Natural killer cell (primary cell): ENCODE measurements at regions of chr19 and their contacts with region 1.

Region 1: DNA sequence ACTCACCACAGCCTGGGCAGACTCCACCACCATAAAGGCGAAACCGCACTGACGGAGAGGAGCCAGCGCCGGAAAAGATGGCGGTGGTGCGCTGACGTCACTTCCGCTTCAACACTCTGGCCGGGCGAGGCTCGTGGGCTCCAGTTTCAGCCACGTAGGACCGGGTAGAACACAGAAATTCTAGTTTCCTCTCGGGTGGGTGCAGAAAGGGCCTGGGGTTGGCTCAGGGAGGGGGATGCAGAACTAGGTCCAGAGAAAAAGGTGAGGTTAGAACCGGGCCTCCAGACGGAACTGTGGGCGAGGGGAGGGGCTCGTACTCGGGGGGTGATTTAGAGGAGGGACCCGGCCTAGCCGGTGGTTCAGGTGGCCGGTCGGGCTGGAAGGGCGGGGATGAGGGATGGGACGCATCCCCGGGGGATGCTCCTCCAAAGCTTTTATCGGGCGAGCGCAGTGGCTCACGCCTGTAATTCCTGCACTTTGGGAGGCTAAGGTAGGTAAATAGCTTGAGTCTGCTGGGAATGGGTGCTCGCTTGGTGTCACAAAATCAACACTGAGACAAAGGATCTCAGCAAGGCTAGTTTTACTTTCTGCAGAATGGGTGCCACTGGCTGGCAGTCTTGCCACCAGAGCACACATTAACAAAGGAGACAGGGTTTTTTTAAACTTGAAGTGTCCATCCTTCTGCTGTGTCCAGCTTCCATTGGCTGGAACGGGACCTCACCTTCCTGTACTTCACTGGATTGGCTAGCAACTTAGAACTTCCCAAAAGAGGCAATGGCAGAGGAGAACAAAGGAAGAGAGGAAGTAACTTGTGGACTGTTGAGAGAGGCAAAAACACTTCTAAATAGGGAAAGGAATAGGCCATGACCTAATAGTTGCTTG is at the start of gene ZNF561:
- DNase-seq: peak; percentile 86 to 97
- ATAC-seq: peak; percentile 85 to 93 (median 92)
- H3K4me3 ChIP-seq: peak within 1 kb of the TSS; percentile 77
- H3K4me3 Mint-ChIP-seq: peak within 1 kb of the TSS; percentile 97
- H3K27ac ChIP-seq: peak within 1 kb of the TSS; percentile 84
- H3K27ac Mint-ChIP-seq: peak within 1 kb of the TSS; percentile 97 to 100
- H3K4me1 ChIP-seq: peaks cover 16% of the 10 kb centered on the region
- H3K4me1 Mint-ChIP-seq: peaks cover 22 to 27% of the 10 kb centered on the region in 2 donors
- H3K27me3 ChIP-seq: no peaks in the 10 kb centered on the region
- H3K27me3 Mint-ChIP-seq: no peaks in the 10 kb centered on the region
- CTCF ChIP-seq: no peak
- total RNA-seq, gene ZNF561: 32.2 to 47.3 (median 36.9) TPM

Region 2: GRCh38 chr19:9205501-9206113 is 415.8 kb before region 1 on chr19:
- intact Hi-C with region 1: loop called (anchors 10 kb)
- DNase-seq: peak; percentile 55 to 75
- ATAC-seq: peak; percentile 64 to 81 (median 80)
- H3K4me3 ChIP-seq: no peak overlapping the region
- H3K4me3 Mint-ChIP-seq: no peak overlapping the region
- H3K27ac ChIP-seq: no peak overlapping the region
- H3K27ac Mint-ChIP-seq: peak overlapping the region in 1 of 2 donors; percentile 58
- H3K4me1 ChIP-seq: peaks cover 5% of the 10 kb centered on the region
- H3K4me1 Mint-ChIP-seq: peaks cover 6 to 7% of the 10 kb centered on the region in 2 donors
- H3K27me3 ChIP-seq: no peaks in the 10 kb centered on the region
- H3K27me3 Mint-ChIP-seq: peaks cover 15 to 19% of the 10 kb centered on the region in 2 donors
- CTCF ChIP-seq: peak; percentile 89

Region 3: GRCh38 chr19:9584073-9584833 is 37.1 kb before region 1 on chr19 and contains the start of gene ZNF121:
- intact Hi-C with region 1: loop called (anchors 5 kb)
- DNase-seq: peak; percentile 83 to 89
- ATAC-seq: peak; percentile 88 to 89 (median 89)
- H3K4me3 ChIP-seq: peak within 1 kb of the TSS; percentile 95
- H3K4me3 Mint-ChIP-seq: peak within 1 kb of the TSS; percentile 96
- H3K27ac ChIP-seq: peak within 1 kb of the TSS; percentile 94
- H3K27ac Mint-ChIP-seq: peak within 1 kb of the TSS; percentile 97
- H3K4me1 ChIP-seq: peaks cover 27% of the 10 kb centered on the region
- H3K4me1 Mint-ChIP-seq: peaks cover 41 to 44% of the 10 kb centered on the region in 2 donors
- H3K27me3 ChIP-seq: no peaks in the 10 kb centered on the region
- H3K27me3 Mint-ChIP-seq: peaks cover 9 to 19% of the 10 kb centered on the region in 2 donors
- CTCF ChIP-seq: no peak
- total RNA-seq, gene ZNF121: 32.9 to 35.7 (median 33.1) TPM

Region 4: DNA sequence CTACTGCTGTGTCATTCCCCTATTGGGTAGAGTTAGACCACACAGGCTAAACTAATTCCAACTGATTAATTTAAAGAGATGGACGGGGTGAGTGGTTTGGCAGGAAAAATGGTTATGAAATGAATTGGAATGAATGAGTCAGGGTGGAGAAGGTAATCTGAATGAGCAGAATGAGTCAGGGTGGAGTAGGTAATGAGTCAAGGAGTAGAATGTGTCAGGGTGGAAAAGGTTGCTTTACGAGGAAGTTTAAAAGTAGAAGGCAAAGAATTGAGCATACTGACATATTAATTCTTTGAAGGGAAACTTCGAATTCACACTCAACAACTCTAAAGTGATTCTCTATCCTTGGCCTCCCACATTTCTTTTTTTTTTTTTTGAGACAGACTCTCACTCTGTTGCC is 24.4 kb before region 1 on chr19:
- intact Hi-C with region 1: no loop called
- DNase-seq: no peak
- ATAC-seq: no peak
- H3K4me3 ChIP-seq: no peak overlapping the region
- H3K4me3 Mint-ChIP-seq: no peak overlapping the region
- H3K27ac ChIP-seq: no peak overlapping the region
- H3K27ac Mint-ChIP-seq: no peak overlapping the region
- H3K4me1 ChIP-seq: no peaks in the 10 kb centered on the region
- H3K4me1 Mint-ChIP-seq: no peaks in the 10 kb centered on the region
- H3K27me3 ChIP-seq: no peaks in the 10 kb centered on the region
- H3K27me3 Mint-ChIP-seq: peaks cover 9 to 15% of the 10 kb centered on the region in 2 donors
- CTCF ChIP-seq: no peak

Region 5: GRCh38 chr19:9700229-9700981 is 79.0 kb after region 1 on chr19:
- intact Hi-C with region 1: no loop called
- DNase-seq: no peak
- ATAC-seq: no peak
- H3K4me3 ChIP-seq: no peak overlapping the region
- H3K4me3 Mint-ChIP-seq: no peak overlapping the region
- H3K27ac ChIP-seq: no peak overlapping the region
- H3K27ac Mint-ChIP-seq: no peak overlapping the region
- H3K4me1 ChIP-seq: peaks cover 4% of the 10 kb centered on the region
- H3K4me1 Mint-ChIP-seq: peaks cover 0 to 8% of the 10 kb centered on the region in 2 donors
- H3K27me3 ChIP-seq: no peaks in the 10 kb centered on the region
- H3K27me3 Mint-ChIP-seq: peaks cover 0 to 7% of the 10 kb centered on the region in 2 donors
- CTCF ChIP-seq: no peak

Region 6: GRCh38 chr19:9768175-9769112 is 147.0 kb after region 1 on chr19 and contains the start of gene ZNF846:
- intact Hi-C with region 1: loop called (anchors 1 kb)
- DNase-seq: peak; percentile 87 to 96
- ATAC-seq: peak; percentile 91 to 97 (median 93)
- H3K4me3 ChIP-seq: peak within 1 kb of the TSS; percentile 91
- H3K4me3 Mint-ChIP-seq: peak within 1 kb of the TSS; percentile 96
- H3K27ac ChIP-seq: peak within 1 kb of the TSS; percentile 92
- H3K27ac Mint-ChIP-seq: peak within 1 kb of the TSS; percentile 96 to 97
- H3K4me1 ChIP-seq: peaks cover 16% of the 10 kb centered on the region
- H3K4me1 Mint-ChIP-seq: peaks cover 5% of the 10 kb centered on the region in 2 donors
- H3K27me3 ChIP-seq: no peaks in the 10 kb centered on the region
- H3K27me3 Mint-ChIP-seq: no peaks in the 10 kb centered on the region
- CTCF ChIP-seq: no peak
- total RNA-seq, gene ZNF846: 9.8 to 15.6 (median 12.8) TPM

Region 7: GRCh38 chr19:9865732-9866501 is 244.5 kb after region 1 on chr19:
- intact Hi-C with region 1: no loop called
- DNase-seq: peak; percentile 29 to 80
- ATAC-seq: peak; percentile 84 to 99 (median 95)
- H3K4me3 ChIP-seq: no peak overlapping the region
- H3K4me3 Mint-ChIP-seq: peak overlapping the region; percentile 65
- H3K27ac ChIP-seq: no peak overlapping the region
- H3K27ac Mint-ChIP-seq: peak overlapping the region in 1 of 2 donors; percentile 49
- H3K4me1 ChIP-seq: peaks cover 36% of the 10 kb centered on the region
- H3K4me1 Mint-ChIP-seq: peaks cover 25 to 29% of the 10 kb centered on the region in 2 donors
- H3K27me3 ChIP-seq: no peaks in the 10 kb centered on the region
- H3K27me3 Mint-ChIP-seq: no peaks in the 10 kb centered on the region
- CTCF ChIP-seq: no peak